ENCODE measurements at regions of chr1 and their contacts with region 1.

Region 1: DNA sequence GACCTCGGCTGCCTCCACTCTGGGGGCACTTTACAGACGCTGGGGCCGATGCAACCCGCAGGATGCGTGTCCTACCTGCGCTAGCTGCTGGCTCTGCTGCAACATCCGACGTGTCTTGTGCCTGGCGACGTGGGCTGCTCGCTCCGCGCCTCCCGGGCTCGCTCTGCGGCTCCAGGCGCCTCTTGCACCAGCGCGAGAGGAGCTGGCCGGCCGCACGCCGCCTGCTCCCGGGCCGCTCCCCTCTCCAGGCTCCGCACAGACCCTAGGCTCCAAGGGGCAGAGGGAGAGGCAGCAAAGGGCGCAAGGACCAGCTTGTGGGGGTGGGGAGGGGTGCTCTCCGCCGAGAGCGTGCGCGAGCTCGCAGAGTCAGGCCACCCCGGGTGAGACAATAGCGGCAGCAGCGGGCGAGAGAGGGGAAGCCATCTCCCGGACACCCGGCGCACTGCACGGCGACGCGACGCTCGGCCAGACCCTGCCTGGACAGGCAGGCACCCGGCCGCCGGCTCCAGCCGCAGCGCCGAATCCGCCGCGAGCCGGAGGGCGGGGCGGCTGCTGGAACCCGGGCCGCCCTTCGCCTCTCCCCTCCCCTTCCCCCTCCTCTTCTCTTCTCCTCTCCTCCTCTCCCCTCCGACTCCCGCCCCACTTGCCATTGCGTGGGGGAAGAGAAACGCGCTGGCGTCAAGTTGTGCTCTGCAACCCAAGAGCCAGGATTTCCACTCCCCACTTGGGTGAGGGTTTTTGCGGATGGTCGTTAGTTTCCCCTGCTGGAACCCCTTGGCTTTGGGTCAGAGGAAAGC is at the start of gene PIK3C2B:
- DNase-seq: peak; percentile 90 to 95 (median 95)
- ATAC-seq: peak; percentile 94 to 96
- H3K4me3 ChIP-seq: peak within 1 kb of the TSS; percentile 72
- H3K27ac ChIP-seq: peak within 1 kb of the TSS; percentile 59
- H3K4me1 ChIP-seq: peaks cover 4% of the 10 kb centered on the region
- H3K27me3 ChIP-seq: no peaks in the 10 kb centered on the region
- total RNA-seq, gene PIK3C2B: 24.9 to 32.7 (median 29.0) TPM

Region 2: DNA sequence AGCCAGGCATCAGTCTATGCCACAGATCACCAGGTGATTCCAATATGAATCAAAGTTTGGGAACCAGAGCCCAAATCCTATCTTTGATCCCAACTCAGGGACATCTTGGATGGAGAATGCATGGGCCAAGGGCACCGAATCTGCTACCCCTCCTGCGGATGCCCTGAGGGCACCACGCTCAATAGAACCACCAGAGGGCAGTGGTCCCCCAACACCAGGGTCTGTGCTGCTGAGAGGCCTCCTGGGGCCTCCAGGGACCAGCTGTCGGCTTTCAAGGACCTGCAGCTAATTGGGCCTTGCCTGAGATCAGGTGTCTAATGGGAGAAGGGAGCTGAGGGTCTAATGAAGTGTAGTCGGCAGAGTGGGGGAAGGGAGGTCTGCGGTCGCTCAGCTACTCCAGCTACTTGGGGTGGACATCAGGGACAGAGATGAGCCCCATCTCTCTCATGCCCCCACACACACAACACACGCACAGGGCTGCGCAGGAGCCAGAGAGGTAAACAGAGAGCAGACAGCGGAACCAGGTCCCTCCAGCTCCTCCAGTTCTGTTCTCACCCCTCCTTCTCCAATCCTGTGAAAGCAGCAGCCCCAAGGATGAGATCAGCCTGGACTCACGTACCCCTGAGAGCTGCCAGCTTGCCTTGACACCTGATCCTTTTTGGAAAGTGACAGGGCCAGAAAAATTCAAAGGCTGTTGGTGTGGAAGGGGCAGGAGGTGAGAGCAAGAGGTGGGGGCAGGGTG is 47.9 kb before region 1 on chr1:
- intact Hi-C with region 1: loop called in 2 of 4 experiments (anchors 2 to 5 kb)
- DNase-seq: peak; percentile 73 to 89 (median 88)
- ATAC-seq: peak; percentile 48 to 65
- H3K4me3 ChIP-seq: no peak overlapping the region
- H3K27ac ChIP-seq: peak overlapping the region; percentile 14
- H3K4me1 ChIP-seq: peaks cover 21% of the 10 kb centered on the region
- H3K27me3 ChIP-seq: no peaks in the 10 kb centered on the region

Region 3: GRCh38 chr1:204453141-204453772 is 41.2 kb before region 1 on chr1:
- intact Hi-C with region 1: loop called in 2 of 4 experiments (anchors 2 to 5 kb)
- DNase-seq: no peak
- ATAC-seq: no peak
- H3K4me3 ChIP-seq: no peak overlapping the region
- H3K27ac ChIP-seq: no peak overlapping the region
- H3K4me1 ChIP-seq: peaks cover 13% of the 10 kb centered on the region
- H3K27me3 ChIP-seq: no peaks in the 10 kb centered on the region

Region 4: GRCh38 chr1:204461331-204462228 is 32.9 kb before region 1 on chr1:
- intact Hi-C with region 1: loop called in 1 of 4 experiments (anchors 5 kb)
- DNase-seq: peak; percentile 65 to 78 (median 72)
- ATAC-seq: peak; percentile 36 to 75
- H3K4me3 ChIP-seq: no peak overlapping the region
- H3K27ac ChIP-seq: peak overlapping the region; percentile 68
- H3K4me1 ChIP-seq: peaks cover 45% of the 10 kb centered on the region
- H3K27me3 ChIP-seq: no peaks in the 10 kb centered on the region

Measured in right cardiac atrium (tissue), 5 donors.